K562 (cell line): ENCODE measurements at regions of chr14 and their contacts with region 1.

Region 1: GRCh38 chr14:77053046-77053841 is 24.7 kb upstream of the IRF2BPL start:
- DNase-seq: peak; percentile 71 to 78 (median 74)
- ATAC-seq: peak; percentile 95
- H3K4me3 ChIP-seq: no peak overlapping the region
- H3K27ac ChIP-seq: no peak overlapping the region
- H3K4me1 ChIP-seq: peaks cover 1 to 8% of the 10 kb centered on the region in 2 experiments; a peak in 3 of 5 replicates
- H3K27me3 ChIP-seq: no peaks in the 10 kb centered on the region
- CTCF ChIP-seq: peak; percentile 86 to 97 (median 90)
- EP300 ChIP-seq: no peak
- POLR2A ChIP-seq: no peak
- RAD21 ChIP-seq: peak; percentile 89 to 96

Region 2: DNA sequence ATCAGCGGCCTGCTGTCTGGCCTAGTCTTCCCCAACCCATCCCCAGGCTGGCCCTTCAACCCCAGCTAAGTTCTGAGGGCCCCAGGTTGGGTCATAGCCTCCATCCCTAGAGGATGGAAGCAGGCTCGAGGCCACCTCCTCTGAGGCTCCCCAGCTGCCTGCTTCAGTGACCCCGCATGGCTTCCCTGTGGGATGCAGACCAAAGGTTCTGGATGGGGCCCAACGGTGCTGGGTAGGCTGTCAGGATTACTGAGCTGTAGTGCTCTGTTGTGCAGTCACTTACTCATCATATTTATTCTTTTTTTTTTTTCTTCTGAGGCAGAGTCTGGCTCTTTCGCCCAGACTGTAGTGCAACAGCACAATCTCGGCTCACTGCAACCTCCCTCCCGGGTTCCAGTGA is 116.8 kb before region 1 on chr14:
- CTCF ChIA-PET with region 1: no interaction called
- POLR2A ChIA-PET with region 1: no interaction called
- in situ Hi-C with region 1: no loop called
- intact Hi-C with region 1: no loop called
- DNase-seq: no peak
- ATAC-seq: no peak
- H3K4me3 ChIP-seq: no peak overlapping the region
- H3K27ac ChIP-seq: no peak overlapping the region
- H3K4me1 ChIP-seq: peaks cover 0 to 3% of the 10 kb centered on the region in 2 experiments; a peak in 1 of 5 replicates
- H3K27me3 ChIP-seq: no peaks in the 10 kb centered on the region
- CTCF ChIP-seq: no peak
- EP300 ChIP-seq: no peak
- POLR2A ChIP-seq: no peak
- RAD21 ChIP-seq: no peak

Region 3: DNA sequence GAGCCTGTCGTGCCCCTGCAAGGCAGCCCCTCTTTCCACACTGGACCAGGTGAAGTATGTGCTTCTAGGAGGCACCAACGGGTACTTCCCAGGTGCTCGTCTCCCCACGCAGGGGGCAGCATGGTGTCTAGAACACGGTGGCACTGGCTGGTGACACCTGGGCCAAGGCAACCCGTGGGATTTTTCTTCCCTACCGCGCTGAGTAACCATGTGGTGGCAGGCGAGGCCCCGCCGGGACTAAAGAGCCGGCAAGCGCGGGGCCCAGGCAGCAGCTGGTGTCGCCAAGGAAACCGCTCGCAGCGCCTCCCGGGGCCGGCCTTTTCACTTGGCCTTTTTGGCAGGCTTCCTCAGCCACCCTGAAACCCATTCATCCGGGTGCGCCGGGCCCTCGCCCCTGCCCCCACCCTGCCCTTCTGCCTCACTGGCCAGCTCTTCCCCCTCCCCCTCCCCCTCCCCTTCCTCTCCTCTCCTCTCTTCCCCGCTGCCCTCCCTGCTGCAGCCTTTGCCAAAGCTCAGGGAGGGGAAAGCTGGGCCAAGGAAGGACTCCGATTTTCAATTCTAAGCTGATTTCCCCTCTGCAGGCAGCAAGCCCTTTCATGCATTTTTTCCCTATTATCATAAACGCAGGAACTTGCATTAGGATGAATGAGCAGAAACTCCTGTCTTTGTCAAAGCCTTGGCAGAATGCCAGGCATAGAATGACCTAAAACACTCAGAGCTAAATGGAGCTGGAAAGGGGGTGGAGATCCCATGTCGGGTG is 106.0 kb before region 1 on chr14:
- CTCF ChIA-PET with region 1: no interaction called
- POLR2A ChIA-PET with region 1: interaction called, 4 read pairs
- in situ Hi-C with region 1: no loop called
- intact Hi-C with region 1: loop called (anchors 1 kb)
- DNase-seq: peak; percentile 61 to 81 (median 66)
- ATAC-seq: peak; percentile 93
- H3K4me3 ChIP-seq: no peak overlapping the region
- H3K27ac ChIP-seq: peak overlapping the region; percentile 49; the same call in 1 of the 3 replicates
- H3K4me1 ChIP-seq: peaks cover 17 to 24% of the 10 kb centered on the region in 2 experiments
- H3K27me3 ChIP-seq: no peaks in the 10 kb centered on the region
- CTCF ChIP-seq: peak; percentile 43 to 66 (median 54); a peak in 5 of 6 replicates
- EP300 ChIP-seq: no peak
- POLR2A ChIP-seq: no peak
- RAD21 ChIP-seq: peak; percentile 62 to 70

Region 4: DNA sequence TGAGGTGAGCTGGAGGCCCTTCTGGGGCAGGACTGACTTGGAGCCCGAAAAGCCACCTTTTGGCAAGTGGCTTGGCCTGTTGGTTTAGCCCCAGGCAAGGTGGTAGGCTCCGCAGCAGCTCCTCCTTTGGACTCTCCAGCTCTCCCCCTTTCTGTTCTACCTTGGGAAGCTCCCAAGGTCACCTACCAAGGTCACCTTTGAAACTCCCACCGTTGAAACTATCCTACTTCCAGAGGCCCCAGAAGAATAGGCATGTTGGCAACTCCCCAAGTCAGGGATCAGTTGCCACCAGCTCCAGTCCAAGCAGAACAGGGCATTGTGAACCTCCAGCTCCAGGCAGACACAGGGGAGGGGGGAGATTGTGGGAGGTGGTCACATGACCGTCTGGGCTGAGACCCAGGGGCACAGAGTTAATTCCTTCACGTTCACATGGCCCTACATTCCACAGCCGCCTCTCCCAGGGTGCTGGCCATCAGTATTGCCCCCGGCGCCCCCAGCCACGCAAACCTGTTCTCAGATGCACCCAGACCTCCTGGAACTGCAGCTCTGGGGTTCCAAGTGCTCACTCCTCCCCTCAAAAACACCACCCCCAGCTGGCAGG is 39.1 kb before region 1 on chr14:
- CTCF ChIA-PET with region 1: no interaction called
- POLR2A ChIA-PET with region 1: no interaction called
- in situ Hi-C with region 1: no loop called
- intact Hi-C with region 1: loop called (anchors 5 kb)
- DNase-seq: no peak
- ATAC-seq: no peak
- H3K4me3 ChIP-seq: no peak overlapping the region
- H3K27ac ChIP-seq: no peak overlapping the region
- H3K4me1 ChIP-seq: no peaks in the 10 kb centered on the region; a peak in 2 of 5 replicates
- H3K27me3 ChIP-seq: no peaks in the 10 kb centered on the region
- CTCF ChIP-seq: no peak
- EP300 ChIP-seq: no peak
- POLR2A ChIP-seq: no peak
- RAD21 ChIP-seq: no peak